A673 (cell line): ENCODE measurements at regions of chr2 and their contacts with region 1.

Region 1: GRCh38 chr2:206442833-206443734 is at the start of gene ADAM23:
- DNase-seq: peak; percentile 50
- H3K4me3 ChIP-seq: peak within 1 kb of the TSS; percentile 19
- H3K27ac ChIP-seq: no peak within 1 kb of the TSS
- H3K4me1 ChIP-seq: no peaks in the 10 kb centered on the region
- H3K27me3 ChIP-seq: peaks cover 79% of the 10 kb centered on the region
- CTCF ChIP-seq: peak; percentile 33; the same call in 1 of the 2 replicates
- total RNA-seq, gene ADAM23: 0.21 and 0.44 TPM in 2 replicates

Region 2: GRCh38 chr2:206328979-206329378 is 114.1 kb before region 1 on chr2:
- CTCF ChIA-PET with region 1: interaction called, 13 read pairs
- POLR2A ChIA-PET with region 1: no interaction called
- intact Hi-C with region 1: no loop called
- DNase-seq: no peak
- H3K4me3 ChIP-seq: no peak overlapping the region
- H3K27ac ChIP-seq: no peak overlapping the region
- H3K4me1 ChIP-seq: no peaks in the 10 kb centered on the region
- H3K27me3 ChIP-seq: no peaks in the 10 kb centered on the region
- CTCF ChIP-seq: no peak